Left cardiac atrium (tissue), 4 donors: ENCODE measurements at regions of chr21 and their contacts with region 1.

Region 1: DNA sequence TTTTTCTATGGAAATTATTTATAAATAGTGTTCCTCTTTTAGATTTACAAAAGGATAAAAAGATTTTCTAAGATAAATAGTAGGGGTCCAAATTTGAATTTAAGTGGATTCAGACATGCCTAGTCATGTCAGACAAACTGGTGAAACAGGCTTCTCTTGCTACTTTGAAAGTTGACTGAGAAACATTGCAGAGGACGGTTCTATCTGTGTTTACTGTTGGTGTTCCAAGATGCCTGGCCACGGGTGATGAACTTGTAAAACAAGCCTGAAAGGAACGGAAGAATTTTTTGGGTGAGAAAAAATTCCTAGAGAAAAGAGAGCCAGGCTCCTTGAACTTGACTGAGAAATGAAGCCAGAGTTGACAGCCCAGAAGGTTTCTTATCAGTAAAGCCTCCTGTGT is 2.2 kb downstream of the KRTAP19-1 start:
- DNase-seq: no peak
- ATAC-seq: peak in 1 of 2 donors; percentile 44

Region 2: GRCh38 chr21:30567617-30568016 is 89.6 kb after region 1 on chr21:
- intact Hi-C with region 1: loop called in 1 of 2 experiments (anchors 5 kb)
- DNase-seq: no peak
- ATAC-seq: peak in 1 of 2 donors; percentile 29

Region 3: DNA sequence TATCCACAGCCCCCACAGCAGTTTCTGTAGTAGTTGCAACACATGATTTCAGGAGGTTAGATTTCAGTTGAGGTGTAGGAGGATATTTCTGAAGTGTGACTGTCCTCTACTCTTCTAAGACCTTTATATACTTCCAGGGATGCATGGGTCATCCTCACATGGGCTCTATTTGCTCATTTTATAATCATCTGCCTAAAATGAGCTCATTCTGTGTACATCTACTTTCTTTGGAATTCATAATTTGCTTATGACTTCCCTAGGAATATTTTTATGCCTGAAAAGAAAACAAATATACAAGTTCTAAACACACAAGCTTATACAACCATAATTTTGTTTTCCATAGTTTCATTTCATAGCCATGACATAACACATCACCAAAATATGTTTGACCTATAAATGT is 269.1 kb after region 1 on chr21 and contains the start of gene KRTAP21-2:
- intact Hi-C with region 1: no loop called
- DNase-seq: no peak
- ATAC-seq: no peak
- total RNA-seq, gene KRTAP21-2: not detected